ENCODE measurements at regions of chr4 and their contacts with region 1.

Region 1: GRCh38 chr4:68175562-68176155 is 46.0 kb upstream of the TMPRSS11F start:
- H3K4me3 ChIP-seq: no peak overlapping the region
- H3K27ac ChIP-seq: no peak overlapping the region
- H3K4me1 ChIP-seq: no peaks in the 10 kb centered on the region
- CTCF ChIP-seq: no peak

Region 2: DNA sequence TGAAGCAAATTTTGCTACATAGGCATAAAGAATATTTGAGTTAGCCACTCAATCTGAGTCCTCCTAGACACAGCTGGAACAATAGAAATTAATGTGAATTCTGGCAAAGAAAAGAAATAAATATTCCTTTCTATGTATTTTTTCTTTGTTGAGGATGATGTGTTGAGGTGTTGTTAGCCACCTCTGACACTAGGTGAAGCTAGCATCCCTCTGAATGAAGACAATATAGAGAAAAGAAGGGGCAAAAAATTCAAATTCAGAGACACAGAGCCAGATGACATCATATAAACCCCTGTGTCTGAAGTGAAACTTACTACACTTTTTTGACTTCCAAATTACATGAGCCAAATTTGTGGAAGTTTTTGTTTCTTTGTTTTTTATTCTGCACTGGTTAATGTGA is 257.2 kb before region 1 on chr4:
- CTCF ChIA-PET with region 1: interaction called, 19 read pairs
- POLR2A ChIA-PET with region 1: no interaction called
- H3K4me3 ChIP-seq: no peak overlapping the region
- H3K27ac ChIP-seq: no peak overlapping the region
- H3K4me1 ChIP-seq: no peaks in the 10 kb centered on the region
- CTCF ChIP-seq: no peak

Region 3: GRCh38 chr4:67928575-67928974 is 247.1 kb before region 1 on chr4:
- CTCF ChIA-PET with region 1: no interaction called
- POLR2A ChIA-PET with region 1: no interaction called
- H3K4me3 ChIP-seq: no peak overlapping the region
- H3K27ac ChIP-seq: no peak overlapping the region
- H3K4me1 ChIP-seq: no peaks in the 10 kb centered on the region
- CTCF ChIP-seq: no peak

Measured in HEK293 (cell line).